Sigmoid colon (tissue), 7 donors: ENCODE measurements at regions of chr1 and their contacts with region 1.

Region 1: GRCh38 chr1:116418091-116418830 is 45.2 kb downstream of the ATP1A1 start:
- DNase-seq: peak; percentile 92
- H3K4me3 ChIP-seq: peak overlapping the region; percentile 58 to 76 (median 65)
- H3K27ac ChIP-seq: peak overlapping the region; percentile 69 to 78 (median 74)
- H3K4me1 ChIP-seq: peaks cover 0 to 17% (median 12%) of the 10 kb centered on the region in 4 donors
- H3K27me3 ChIP-seq: no peaks in the 10 kb centered on the region
- CTCF ChIP-seq: no peak
- EP300 ChIP-seq: no peak
- POLR2A ChIP-seq: peak; percentile 18 to 30

Region 2: DNA sequence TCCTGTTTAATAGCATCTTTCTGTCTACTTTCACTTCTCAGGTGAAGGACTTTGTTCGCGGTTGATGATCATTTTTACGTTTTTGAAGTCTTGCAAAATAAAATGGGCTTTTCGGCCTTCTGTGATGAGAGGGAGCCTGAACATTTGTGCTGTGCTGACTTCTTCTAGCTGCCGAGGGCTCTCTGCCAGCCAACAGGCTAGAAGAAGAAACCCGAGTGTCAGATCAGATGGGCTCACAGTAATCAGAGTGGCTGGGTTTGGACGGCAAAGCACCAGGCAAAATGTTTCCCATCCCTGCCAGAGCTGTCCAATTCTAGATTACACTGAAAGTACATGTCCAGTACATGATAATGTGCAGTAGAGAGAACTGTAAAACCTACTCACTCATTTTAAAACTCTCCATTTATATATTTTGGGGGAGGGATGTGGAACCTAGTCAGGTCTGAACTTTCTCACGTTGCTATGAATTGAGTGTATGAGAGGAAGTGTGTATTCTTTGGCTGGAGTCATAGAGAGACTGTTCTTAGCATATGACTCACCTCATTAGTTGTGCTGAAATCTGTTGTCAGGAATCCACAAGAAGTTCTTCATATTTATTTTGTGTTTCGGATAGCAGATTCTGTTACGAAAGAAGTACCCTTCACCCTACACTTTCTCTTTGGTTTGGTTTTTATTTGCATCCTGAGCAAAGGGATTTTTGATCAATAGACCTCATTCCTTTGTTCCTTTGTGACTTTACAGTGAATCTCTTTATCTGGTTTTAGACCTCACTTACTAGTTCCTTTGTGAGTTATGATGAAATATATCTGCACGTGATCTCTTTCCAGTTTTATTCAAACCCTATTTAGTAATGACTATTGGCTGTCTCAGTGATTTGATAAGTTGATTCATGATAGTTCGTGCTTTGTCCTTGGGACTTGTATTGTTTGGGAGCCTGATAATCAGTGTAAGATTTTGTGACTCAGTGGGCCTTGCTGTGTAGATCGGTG is 40.4 kb before region 1 on chr1:
- intact Hi-C with region 1: loop called (anchors 2 kb)
- DNase-seq: peak; percentile 90
- H3K4me3 ChIP-seq: peak overlapping the region in 3 of 4 donors; percentile 2 to 17 (median 13)
- H3K27ac ChIP-seq: peak overlapping the region; percentile 80 to 98 (median 95)
- H3K4me1 ChIP-seq: peaks cover 0 to 80% (median 66%) of the 10 kb centered on the region in 4 donors
- H3K27me3 ChIP-seq: no peaks in the 10 kb centered on the region
- CTCF ChIP-seq: no peak
- EP300 ChIP-seq: peak in 1 of 4 donors; percentile 29
- POLR2A ChIP-seq: no peak